ENCODE measurements at regions of chr6 and their contacts with region 1.

Region 1: DNA sequence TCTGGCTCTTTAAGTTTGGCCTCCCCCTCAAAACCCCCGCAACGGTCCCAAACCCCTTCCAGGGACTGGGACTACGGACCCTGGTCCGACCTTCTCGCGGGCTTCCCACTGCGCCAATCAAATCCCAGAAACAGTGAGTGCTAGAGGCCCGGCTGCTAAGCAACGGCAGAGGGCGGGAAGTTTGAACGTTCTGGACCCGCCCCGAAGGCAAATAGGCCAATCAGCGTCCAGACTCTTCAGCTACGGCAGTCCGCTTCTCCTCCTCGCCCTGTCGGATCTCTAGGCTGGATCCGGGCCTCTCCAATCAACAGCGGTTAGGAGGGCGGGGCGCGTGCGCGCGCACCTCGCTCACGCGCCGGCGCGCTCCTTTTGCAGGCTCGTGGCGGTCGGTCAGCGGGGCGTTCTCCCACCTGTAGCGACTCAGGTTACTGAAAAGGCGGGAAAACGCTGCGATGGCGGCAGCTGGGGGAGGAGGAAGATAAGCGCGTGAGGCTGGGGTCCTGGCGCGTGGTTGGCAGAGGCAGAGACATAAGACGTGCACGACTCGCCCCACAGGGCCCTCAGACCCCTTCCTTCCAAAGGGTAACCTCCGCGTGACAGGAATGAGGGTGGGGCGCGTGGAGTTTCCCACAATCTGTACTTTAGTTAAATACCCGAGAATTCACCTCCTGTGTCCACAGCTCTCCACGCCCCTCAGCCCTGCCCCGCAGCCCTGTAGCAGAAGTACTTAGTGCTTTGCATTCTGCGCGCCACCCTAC is at the start of gene MSH5:
- DNase-seq: peak; percentile 99
- ATAC-seq: peak; percentile 86
- H3K4me3 ChIP-seq: peak within 1 kb of the TSS; percentile 86 to 92
- H3K27ac ChIP-seq: peak within 1 kb of the TSS; percentile 99
- H3K4me1 ChIP-seq: peaks cover 35 to 51% of the 10 kb centered on the region in 2 experiments
- H3K27me3 ChIP-seq: no peaks in the 10 kb centered on the region
- CTCF ChIP-seq: no peak
- POLR2A ChIP-seq: peak; percentile 39
- RAD21 ChIP-seq: no peak
- total RNA-seq, gene MSH5: 90.4 TPM

Region 2: GRCh38 chr6:31665501-31666336 is 74.1 kb before region 1 on chr6 and contains the start of gene CSNK2B:
- CTCF ChIA-PET with region 1: interaction called, 4 read pairs
- POLR2A ChIA-PET with region 1: interaction called, 8 read pairs
- RAD21 ChIA-PET with region 1: no interaction called
- intact Hi-C with region 1: loop called (anchors 5 kb)
- DNase-seq: peak; percentile 96
- ATAC-seq: peak; percentile 84
- H3K4me3 ChIP-seq: peak within 1 kb of the TSS; percentile 97 to 99
- H3K27ac ChIP-seq: peak within 1 kb of the TSS; percentile 90
- H3K4me1 ChIP-seq: peaks cover 14 to 34% of the 10 kb centered on the region in 2 experiments; a peak in 3 of 4 replicates
- H3K27me3 ChIP-seq: no peaks in the 10 kb centered on the region
- CTCF ChIP-seq: no peak
- POLR2A ChIP-seq: peak; percentile 89
- RAD21 ChIP-seq: no peak
- total RNA-seq, gene CSNK2B: 210 TPM

Region 3: GRCh38 chr6:31702819-31703522 is 36.8 kb before region 1 on chr6 and contains the start of gene ABHD16A:
- CTCF ChIA-PET with region 1: no interaction called
- POLR2A ChIA-PET with region 1: interaction called, 4 read pairs
- RAD21 ChIA-PET with region 1: no interaction called
- intact Hi-C with region 1: loop called (anchors 2 kb)
- DNase-seq: peak; percentile 98
- ATAC-seq: peak; percentile 93
- H3K4me3 ChIP-seq: peak within 1 kb of the TSS; percentile 89 to 98
- H3K27ac ChIP-seq: peak within 1 kb of the TSS; percentile 82
- H3K4me1 ChIP-seq: peaks cover 7 to 15% of the 10 kb centered on the region in 2 experiments; a peak in 3 of 4 replicates
- H3K27me3 ChIP-seq: no peaks in the 10 kb centered on the region
- CTCF ChIP-seq: 0 out of 6 replicates have a peak, but pooled peaks of 1 of the 3 experiments have one; percentile 4
- POLR2A ChIP-seq: peak; percentile 48
- RAD21 ChIP-seq: no peak; the same call in 1 of the 2 replicates
- total RNA-seq, gene ABHD16A: 32.4 TPM

Region 4: GRCh38 chr6:31769684-31770371 is 30.0 kb after region 1 on chr6:
- CTCF ChIA-PET with region 1: interaction called, 25 read pairs
- POLR2A ChIA-PET with region 1: interaction called, 4 read pairs
- RAD21 ChIA-PET with region 1: interaction called, 4 to 7 read pairs
- intact Hi-C with region 1: no loop called
- DNase-seq: peak; percentile 42
- ATAC-seq: peak; percentile 86
- H3K4me3 ChIP-seq: no peak overlapping the region
- H3K27ac ChIP-seq: no peak overlapping the region
- H3K4me1 ChIP-seq: peaks cover 17 to 38% of the 10 kb centered on the region in 2 experiments
- H3K27me3 ChIP-seq: no peaks in the 10 kb centered on the region
- CTCF ChIP-seq: peak in 2 of 3 experiments; percentile 95 to 97; a peak in 4 of 6 replicates
- POLR2A ChIP-seq: no peak
- RAD21 ChIP-seq: no peak

Measured in HCT116 (cell line).